ENCODE measurements at regions of chr5 and their contacts with region 1.

Region 1: GRCh38 chr5:43631182-43631910 is 28.4 kb downstream of the NNT start:
- DNase-seq: peak; percentile 72
- H3K4me3 ChIP-seq: no peak overlapping the region
- H3K27ac ChIP-seq: no peak overlapping the region
- H3K4me1 ChIP-seq: no peaks in the 10 kb centered on the region
- H3K27me3 ChIP-seq: no peaks in the 10 kb centered on the region
- CTCF ChIP-seq: peak; percentile 59 to 68
- POLR2A ChIP-seq: no peak

Region 2: GRCh38 chr5:42285230-42285629 is 1346.1 kb before region 1 on chr5:
- CTCF ChIA-PET with region 1: no interaction called
- POLR2A ChIA-PET with region 1: no interaction called
- dilution Hi-C with region 1: no loop called
- intact Hi-C with region 1: no loop called
- DNase-seq: no peak
- H3K4me3 ChIP-seq: no peak overlapping the region
- H3K27ac ChIP-seq: no peak overlapping the region
- H3K4me1 ChIP-seq: no peaks in the 10 kb centered on the region
- H3K27me3 ChIP-seq: no peaks in the 10 kb centered on the region
- CTCF ChIP-seq: no peak
- POLR2A ChIP-seq: no peak

Region 3: GRCh38 chr5:43556857-43557542 is 74.3 kb before region 1 on chr5 and contains the start of gene PAIP1:
- CTCF ChIA-PET with region 1: interaction called, 17 read pairs
- POLR2A ChIA-PET with region 1: no interaction called
- dilution Hi-C with region 1: no loop called
- intact Hi-C with region 1: loop called (anchors 2 kb)
- DNase-seq: peak; percentile 86
- H3K4me3 ChIP-seq: peak within 1 kb of the TSS; percentile 91 to 98 (median 96)
- H3K27ac ChIP-seq: peak within 1 kb of the TSS; percentile 73
- H3K4me1 ChIP-seq: peaks cover 25% of the 10 kb centered on the region
- H3K27me3 ChIP-seq: peaks cover 1 to 3% of the 10 kb centered on the region in 2 experiments
- CTCF ChIP-seq: peak; percentile 44 to 71
- POLR2A ChIP-seq: no peak
- total RNA-seq, gene PAIP1: 81.6 and 90.1 TPM in 2 replicates

Region 4: GRCh38 chr5:43616535-43616934 is 14.8 kb before region 1 on chr5:
- CTCF ChIA-PET with region 1: interaction called, 16 read pairs
- POLR2A ChIA-PET with region 1: no interaction called
- dilution Hi-C with region 1: no loop called
- intact Hi-C with region 1: no loop called
- DNase-seq: no peak
- H3K4me3 ChIP-seq: no peak overlapping the region
- H3K27ac ChIP-seq: no peak overlapping the region
- H3K4me1 ChIP-seq: no peaks in the 10 kb centered on the region
- H3K27me3 ChIP-seq: no peaks in the 10 kb centered on the region
- CTCF ChIP-seq: no peak
- POLR2A ChIP-seq: no peak

Region 5: DNA sequence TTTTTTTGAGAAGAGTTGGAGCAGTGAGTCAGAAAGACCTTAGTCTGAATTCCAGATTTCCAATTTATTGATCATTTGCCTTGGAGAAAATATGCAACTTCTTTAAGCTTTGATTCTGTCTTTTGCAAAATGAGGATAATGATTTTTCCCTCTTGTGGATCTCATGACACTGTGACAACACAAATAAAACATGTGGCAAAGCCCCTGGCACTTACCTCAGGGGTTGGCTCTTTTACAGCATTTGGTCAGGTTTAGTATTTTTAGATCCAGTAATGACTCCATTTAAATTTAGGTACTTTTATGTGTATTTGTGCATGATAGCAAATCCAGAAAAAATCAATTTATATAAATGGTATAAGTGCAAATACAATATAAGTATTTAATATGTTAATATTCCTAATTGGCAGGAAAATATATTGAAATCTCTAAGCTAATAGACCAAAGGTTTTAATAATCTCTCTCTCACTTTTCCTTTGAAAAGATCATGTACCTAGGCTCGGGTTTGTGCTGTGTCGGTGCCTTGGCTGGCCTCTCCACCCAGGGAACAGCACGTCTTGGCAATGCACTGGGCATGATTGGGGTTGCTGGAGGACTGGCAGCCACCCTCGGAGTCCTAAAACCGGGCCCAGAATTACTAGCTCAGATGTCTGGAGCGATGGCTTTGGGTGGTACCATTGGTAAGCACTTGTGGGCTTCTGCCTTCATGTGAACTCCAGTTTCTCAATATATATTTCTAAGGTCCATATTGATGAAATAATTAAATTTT is 21.4 kb after region 1 on chr5:
- CTCF ChIA-PET with region 1: interaction called, 10 read pairs
- POLR2A ChIA-PET with region 1: no interaction called
- dilution Hi-C with region 1: no loop called
- intact Hi-C with region 1: no loop called
- DNase-seq: no peak
- H3K4me3 ChIP-seq: no peak overlapping the region
- H3K27ac ChIP-seq: no peak overlapping the region
- H3K4me1 ChIP-seq: no peaks in the 10 kb centered on the region
- H3K27me3 ChIP-seq: no peaks in the 10 kb centered on the region
- CTCF ChIP-seq: no peak
- POLR2A ChIP-seq: no peak

Region 6: DNA sequence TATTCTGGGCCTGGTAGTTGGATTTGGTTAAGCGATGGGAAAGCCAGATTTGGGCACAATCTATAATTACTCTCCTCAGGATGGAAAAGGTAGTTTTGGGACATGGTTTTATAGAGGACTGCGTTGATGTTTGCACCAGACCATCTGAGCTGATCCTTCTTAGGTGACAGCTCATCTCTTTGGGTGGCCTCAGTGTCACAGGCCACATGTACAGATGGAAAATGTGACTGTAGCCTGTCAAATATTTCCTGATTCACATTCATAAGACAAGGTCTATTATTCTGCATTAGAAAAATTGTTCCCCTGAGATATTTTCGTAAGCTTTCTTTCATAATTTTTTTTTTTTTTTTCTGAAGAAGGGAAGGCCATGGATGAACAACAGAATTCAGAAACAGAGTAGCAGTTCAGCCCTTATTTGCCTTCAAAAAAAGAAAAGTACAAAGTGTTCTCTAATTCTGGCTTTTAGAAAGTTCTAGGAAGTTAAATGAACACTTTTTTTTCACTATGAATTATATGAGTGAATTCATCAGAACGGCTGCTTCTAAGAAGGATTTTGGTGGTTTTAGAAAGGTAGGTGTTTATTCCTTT is 52.6 kb after region 1 on chr5:
- CTCF ChIA-PET with region 1: interaction called, 13 read pairs
- POLR2A ChIA-PET with region 1: no interaction called
- dilution Hi-C with region 1: no loop called
- intact Hi-C with region 1: no loop called
- DNase-seq: no peak
- H3K4me3 ChIP-seq: no peak overlapping the region
- H3K27ac ChIP-seq: no peak overlapping the region
- H3K4me1 ChIP-seq: no peaks in the 10 kb centered on the region
- H3K27me3 ChIP-seq: no peaks in the 10 kb centered on the region
- CTCF ChIP-seq: no peak
- POLR2A ChIP-seq: no peak

Region 7: GRCh38 chr5:44332285-44332971 is 701.1 kb after region 1 on chr5:
- CTCF ChIA-PET with region 1: interaction called, 90 read pairs
- POLR2A ChIA-PET with region 1: no interaction called
- dilution Hi-C with region 1: no loop called
- intact Hi-C with region 1: loop called (anchors 1 kb)
- DNase-seq: peak; percentile 52
- H3K4me3 ChIP-seq: no peak overlapping the region
- H3K27ac ChIP-seq: no peak overlapping the region
- H3K4me1 ChIP-seq: peaks cover 5% of the 10 kb centered on the region
- H3K27me3 ChIP-seq: no peaks in the 10 kb centered on the region
- CTCF ChIP-seq: peak; percentile 49 to 53
- POLR2A ChIP-seq: no peak

Measured in endothelial cell of umbilical vein (primary cell).